CD4-positive, alpha-beta T cell (primary cell): ENCODE measurements at regions of chr4 and their contacts with region 1.

Region 1: GRCh38 chr4:109424093-109424841 is 9.3 kb upstream of the SEC24B start:
- DNase-seq: no peak
- ATAC-seq: no peak
- H3K4me3 ChIP-seq: no peak overlapping the region
- H3K4me3 Mint-ChIP-seq: no peak overlapping the region
- H3K27ac ChIP-seq: no peak overlapping the region
- H3K27ac Mint-ChIP-seq: no peak overlapping the region
- H3K4me1 ChIP-seq: peaks cover 4% of the 10 kb centered on the region
- H3K4me1 Mint-ChIP-seq: peaks cover 3% of the 10 kb centered on the region
- H3K27me3 ChIP-seq: no peaks in the 10 kb centered on the region
- H3K27me3 Mint-ChIP-seq: no peaks in the 10 kb centered on the region
- CTCF ChIP-seq: no peak

Region 2: DNA sequence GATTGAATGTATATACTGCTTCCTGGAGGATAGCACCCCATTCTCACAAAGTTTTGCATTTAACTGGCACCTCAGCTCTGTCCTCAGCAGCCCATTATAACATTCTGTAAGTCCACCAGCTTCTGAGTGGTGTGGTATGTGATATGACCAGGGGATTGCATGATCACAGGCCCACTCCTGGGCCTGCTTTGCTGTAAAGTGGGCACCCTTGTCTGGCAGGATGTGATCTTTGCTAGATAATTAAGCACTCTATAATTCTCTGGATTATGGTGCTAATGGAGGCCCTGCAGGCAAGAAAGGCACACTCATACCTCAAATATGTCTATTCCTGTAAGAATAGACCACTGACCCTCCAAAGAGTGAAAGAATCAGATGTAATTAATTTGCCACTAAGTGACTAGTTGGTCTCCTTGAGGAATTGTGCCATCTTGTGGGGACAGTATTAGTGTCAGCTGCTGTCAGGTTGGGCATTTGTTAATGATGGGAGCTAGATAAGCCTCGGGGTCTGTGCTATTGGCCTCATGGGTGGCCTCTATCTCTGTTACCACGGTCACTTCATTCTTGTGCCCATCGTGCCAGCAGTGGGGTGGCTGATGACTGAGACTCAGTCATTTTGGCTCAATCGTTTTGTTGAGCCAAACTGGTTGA is 379.8 kb after region 1 on chr4:
- CTCF ChIA-PET with region 1: no interaction called
- POLR2A ChIA-PET with region 1: no interaction called
- intact Hi-C with region 1: loop called in 1 of 2 experiments (anchors 5 kb)
- DNase-seq: peak in 5 of 14 experiments; percentile 2 to 66 (median 43)
- ATAC-seq: peak; percentile 51
- H3K4me3 ChIP-seq: no peak overlapping the region
- H3K4me3 Mint-ChIP-seq: no peak overlapping the region
- H3K27ac ChIP-seq: no peak overlapping the region
- H3K27ac Mint-ChIP-seq: no peak overlapping the region
- H3K4me1 ChIP-seq: no peaks in the 10 kb centered on the region
- H3K4me1 Mint-ChIP-seq: no peaks in the 10 kb centered on the region
- H3K27me3 ChIP-seq: no peaks in the 10 kb centered on the region
- H3K27me3 Mint-ChIP-seq: no peaks in the 10 kb centered on the region
- CTCF ChIP-seq: peak; percentile 33

Region 3: GRCh38 chr4:109826719-109827118 is 402.5 kb after region 1 on chr4:
- CTCF ChIA-PET with region 1: no interaction called
- POLR2A ChIA-PET with region 1: no interaction called
- intact Hi-C with region 1: loop called (anchors 1 kb)
- DNase-seq: peak in 3 of 14 experiments; percentile 39 to 43 (median 41)
- ATAC-seq: peak; percentile 62
- H3K4me3 ChIP-seq: no peak overlapping the region
- H3K4me3 Mint-ChIP-seq: no peak overlapping the region
- H3K27ac ChIP-seq: no peak overlapping the region
- H3K27ac Mint-ChIP-seq: no peak overlapping the region
- H3K4me1 ChIP-seq: no peaks in the 10 kb centered on the region
- H3K4me1 Mint-ChIP-seq: no peaks in the 10 kb centered on the region
- H3K27me3 ChIP-seq: no peaks in the 10 kb centered on the region
- H3K27me3 Mint-ChIP-seq: no peaks in the 10 kb centered on the region
- CTCF ChIP-seq: peak; percentile 64

Region 4: GRCh38 chr4:109977854-109978501 is 553.7 kb after region 1 on chr4:
- CTCF ChIA-PET with region 1: interaction called, 3 read pairs
- POLR2A ChIA-PET with region 1: interaction called, 3 read pairs
- intact Hi-C with region 1: loop called (anchors 1 kb)
- DNase-seq: peak in 3 of 14 experiments; percentile 42 to 43 (median 43)
- ATAC-seq: no peak
- H3K4me3 ChIP-seq: no peak overlapping the region
- H3K4me3 Mint-ChIP-seq: no peak overlapping the region
- H3K27ac ChIP-seq: no peak overlapping the region
- H3K27ac Mint-ChIP-seq: no peak overlapping the region
- H3K4me1 ChIP-seq: no peaks in the 10 kb centered on the region
- H3K4me1 Mint-ChIP-seq: no peaks in the 10 kb centered on the region
- H3K27me3 ChIP-seq: peaks cover 3 to 20% of the 10 kb centered on the region in 2 experiments
- H3K27me3 Mint-ChIP-seq: peaks cover 25% of the 10 kb centered on the region
- CTCF ChIP-seq: peak; percentile 73

Region 5: DNA sequence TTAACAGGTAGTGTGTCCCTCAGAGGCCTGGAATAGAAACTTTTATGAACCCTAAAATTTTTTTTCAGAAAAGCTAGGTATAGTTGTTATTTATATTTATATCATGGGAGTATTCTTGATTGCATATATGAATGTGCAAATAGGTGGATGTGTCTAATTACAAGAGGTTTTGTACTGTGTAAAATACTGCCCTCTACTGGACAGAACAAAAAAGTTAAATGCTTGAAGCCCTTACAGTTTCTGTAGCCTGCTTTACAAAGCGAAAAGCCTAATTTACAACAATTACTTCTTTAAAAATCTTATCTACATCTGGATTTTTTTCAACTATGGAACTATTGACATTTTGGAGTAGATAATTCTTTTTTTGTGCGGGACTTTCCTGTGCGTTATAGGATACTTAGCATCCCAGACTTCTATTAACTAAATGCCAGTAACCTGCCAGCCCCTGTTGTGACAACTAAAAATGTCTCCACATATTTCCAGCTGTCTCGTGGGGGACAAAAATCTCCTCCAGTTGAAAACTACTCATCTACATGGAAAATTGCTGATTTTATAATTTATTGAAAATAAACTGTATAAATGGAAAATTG is 1086.8 kb after region 1 on chr4:
- CTCF ChIA-PET with region 1: no interaction called
- POLR2A ChIA-PET with region 1: no interaction called
- intact Hi-C with region 1: loop called (anchors 2 to 5 kb)
- DNase-seq: peak in 3 of 14 experiments; percentile 64 to 69 (median 69)
- ATAC-seq: peak; percentile 56
- H3K4me3 ChIP-seq: no peak overlapping the region
- H3K4me3 Mint-ChIP-seq: no peak overlapping the region
- H3K27ac ChIP-seq: no peak overlapping the region
- H3K27ac Mint-ChIP-seq: no peak overlapping the region
- H3K4me1 ChIP-seq: peaks cover 3% of the 10 kb centered on the region
- H3K4me1 Mint-ChIP-seq: peaks cover 10% of the 10 kb centered on the region
- H3K27me3 ChIP-seq: no peaks in the 10 kb centered on the region
- H3K27me3 Mint-ChIP-seq: no peaks in the 10 kb centered on the region
- CTCF ChIP-seq: peak; percentile 80

Region 6: DNA sequence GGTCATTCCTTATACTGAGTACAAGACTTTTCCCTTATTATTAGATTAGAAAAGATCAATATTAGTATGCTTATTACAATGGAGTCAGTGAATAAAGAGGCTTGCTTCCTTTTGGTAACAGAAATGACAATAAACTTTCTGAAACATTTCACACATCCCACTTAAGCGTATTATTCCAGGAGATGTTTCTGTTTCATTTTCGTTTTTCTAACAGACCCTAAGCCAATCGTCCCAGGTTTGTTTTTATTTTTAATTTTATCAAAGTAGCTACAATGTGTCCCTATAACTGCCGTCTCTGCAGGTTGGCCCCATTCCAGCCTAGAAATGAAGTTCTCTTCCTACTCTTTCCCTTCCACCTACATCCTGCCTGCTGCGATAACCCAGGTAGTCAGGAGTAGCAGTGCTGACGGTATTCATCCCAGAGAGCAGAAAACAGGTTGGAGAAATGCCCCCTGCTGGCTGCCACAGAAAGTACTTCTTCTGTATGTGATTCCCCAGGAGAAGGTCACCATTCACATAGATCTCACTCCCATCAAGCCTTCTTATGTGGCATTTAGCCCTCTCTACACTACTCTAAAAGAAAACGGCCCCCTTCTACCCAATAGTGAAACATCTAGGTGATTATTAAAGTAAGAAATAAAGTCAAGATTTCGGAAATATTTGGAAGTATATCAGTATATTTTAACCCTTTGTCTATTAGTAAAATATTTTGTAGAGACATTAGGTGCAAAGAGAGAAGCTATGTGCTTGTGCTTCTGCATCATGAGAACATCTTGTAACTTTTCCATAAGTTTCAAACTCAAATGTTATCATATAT is 1092.0 kb after region 1 on chr4:
- CTCF ChIA-PET with region 1: no interaction called
- POLR2A ChIA-PET with region 1: no interaction called
- intact Hi-C with region 1: loop called (anchors 2 to 5 kb)
- DNase-seq: peak; percentile 58 to 85 (median 64)
- ATAC-seq: peak; percentile 94
- H3K4me3 ChIP-seq: peak overlapping the region; percentile 62
- H3K4me3 Mint-ChIP-seq: peak overlapping the region; percentile 91
- H3K27ac ChIP-seq: no peak overlapping the region
- H3K27ac Mint-ChIP-seq: no peak overlapping the region
- H3K4me1 ChIP-seq: peaks cover 3% of the 10 kb centered on the region
- H3K4me1 Mint-ChIP-seq: peaks cover 10% of the 10 kb centered on the region
- H3K27me3 ChIP-seq: no peaks in the 10 kb centered on the region
- H3K27me3 Mint-ChIP-seq: peaks cover 7% of the 10 kb centered on the region
- CTCF ChIP-seq: peak; percentile 81